Activated T-helper 2 cell treated with anti-CD3 and anti-CD28 coated beads, Interferon-gamma antibody, Interleukin-2, Interleukin-4, amounts not matched to agents 10 μg/mL and 5 μg/mL and 100 μg/mL, durations not matched to agents 14 hours and 24 hours and 36 hours (primary cell): ENCODE measurements at regions of chr12 and their contacts with region 1.

Region 1: DNA sequence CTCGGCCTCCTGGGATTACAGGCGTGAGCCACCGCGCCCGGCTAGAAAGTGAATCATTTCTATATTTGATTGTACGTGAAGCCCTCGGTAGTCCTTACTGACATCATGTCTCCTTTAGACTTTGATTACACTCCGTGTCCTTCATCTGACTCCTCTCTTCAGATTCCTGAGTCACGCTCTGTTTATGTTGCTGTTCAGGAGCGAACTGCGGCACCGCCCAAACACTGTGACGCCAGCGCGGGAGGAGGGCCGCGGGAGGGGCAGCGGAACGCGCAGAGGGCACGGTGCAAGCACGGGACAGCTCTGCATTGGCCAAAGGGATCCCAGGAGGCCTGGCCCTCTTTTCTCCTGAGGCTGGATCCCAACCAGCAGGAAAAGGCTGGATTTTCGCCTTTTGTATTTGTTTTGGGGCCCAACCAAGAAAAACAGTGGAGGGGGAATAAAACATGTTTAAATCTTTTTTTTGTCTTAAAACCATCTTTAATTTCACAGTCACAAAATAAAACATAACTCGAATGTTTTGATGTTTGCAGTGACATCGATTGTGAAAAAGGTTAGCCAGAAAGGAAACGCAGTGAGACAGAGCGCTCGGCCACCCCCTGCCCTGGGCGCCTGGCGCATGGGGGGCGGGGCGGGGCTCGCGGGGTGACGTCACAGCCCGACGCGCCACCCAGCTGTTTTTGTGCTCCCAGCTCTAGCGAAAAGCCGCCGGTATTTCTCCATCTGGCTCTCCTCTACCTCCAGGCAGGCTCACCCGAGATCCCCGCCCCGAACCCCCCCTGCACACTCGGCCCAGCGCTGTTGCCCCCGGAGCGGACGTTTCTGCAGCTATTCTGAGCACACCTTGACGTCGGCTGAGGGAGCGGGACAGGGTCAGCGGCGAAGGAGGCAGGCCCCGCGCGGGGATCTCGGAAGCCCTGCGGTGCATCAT is at the start of gene GABARAPL1:
- DNase-seq: peak; percentile 81
- H3K4me3 Mint-ChIP-seq: peak within 1 kb of the TSS; percentile 91
- H3K27ac Mint-ChIP-seq: peak within 1 kb of the TSS; percentile 93
- H3K4me1 Mint-ChIP-seq: peaks cover 30% of the 10 kb centered on the region
- H3K27me3 Mint-ChIP-seq: peaks cover 21% of the 10 kb centered on the region
- total RNA-seq, gene GABARAPL1: 4.0 and 5.2 TPM in 2 replicates

Region 2: DNA sequence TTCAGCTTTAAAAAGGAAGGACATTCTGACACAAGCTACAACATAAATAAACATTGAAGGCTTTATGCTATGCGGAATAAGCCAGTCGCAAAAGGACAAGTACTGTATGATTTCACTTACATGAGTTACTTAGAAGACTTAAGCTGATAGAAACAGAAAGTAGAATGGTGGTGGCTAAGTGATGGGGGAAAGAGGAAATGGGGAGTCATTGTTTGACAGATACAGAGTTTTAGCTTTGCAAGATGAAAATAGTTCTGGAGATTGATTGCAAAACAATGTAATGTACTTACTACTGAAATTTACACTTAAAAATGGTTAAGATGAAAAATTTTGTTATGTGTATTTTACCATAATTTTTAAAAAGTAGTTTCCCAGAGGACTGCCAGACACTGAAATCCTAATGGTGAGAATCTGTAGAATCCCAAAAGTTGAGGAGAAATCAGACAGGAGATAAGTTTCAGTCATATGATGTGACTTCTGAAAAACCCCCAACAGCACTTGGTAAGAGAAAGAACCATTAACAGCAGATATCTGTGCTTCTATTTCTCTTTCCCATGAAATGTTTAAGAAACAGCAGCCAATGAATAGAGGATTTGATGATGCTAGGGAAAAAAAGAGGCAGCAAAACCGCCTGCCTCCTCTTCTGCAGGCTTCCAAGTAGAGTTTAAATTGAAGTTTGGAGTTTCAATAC is 263.7 kb before region 1 on chr12:
- intact Hi-C with region 1: loop called (anchors 10 kb)
- DNase-seq: no peak
- H3K4me3 Mint-ChIP-seq: peak overlapping the region; percentile 23
- H3K27ac Mint-ChIP-seq: peak overlapping the region; percentile 53
- H3K4me1 Mint-ChIP-seq: peaks cover 57% of the 10 kb centered on the region
- H3K27me3 Mint-ChIP-seq: no peaks in the 10 kb centered on the region

Region 3: DNA sequence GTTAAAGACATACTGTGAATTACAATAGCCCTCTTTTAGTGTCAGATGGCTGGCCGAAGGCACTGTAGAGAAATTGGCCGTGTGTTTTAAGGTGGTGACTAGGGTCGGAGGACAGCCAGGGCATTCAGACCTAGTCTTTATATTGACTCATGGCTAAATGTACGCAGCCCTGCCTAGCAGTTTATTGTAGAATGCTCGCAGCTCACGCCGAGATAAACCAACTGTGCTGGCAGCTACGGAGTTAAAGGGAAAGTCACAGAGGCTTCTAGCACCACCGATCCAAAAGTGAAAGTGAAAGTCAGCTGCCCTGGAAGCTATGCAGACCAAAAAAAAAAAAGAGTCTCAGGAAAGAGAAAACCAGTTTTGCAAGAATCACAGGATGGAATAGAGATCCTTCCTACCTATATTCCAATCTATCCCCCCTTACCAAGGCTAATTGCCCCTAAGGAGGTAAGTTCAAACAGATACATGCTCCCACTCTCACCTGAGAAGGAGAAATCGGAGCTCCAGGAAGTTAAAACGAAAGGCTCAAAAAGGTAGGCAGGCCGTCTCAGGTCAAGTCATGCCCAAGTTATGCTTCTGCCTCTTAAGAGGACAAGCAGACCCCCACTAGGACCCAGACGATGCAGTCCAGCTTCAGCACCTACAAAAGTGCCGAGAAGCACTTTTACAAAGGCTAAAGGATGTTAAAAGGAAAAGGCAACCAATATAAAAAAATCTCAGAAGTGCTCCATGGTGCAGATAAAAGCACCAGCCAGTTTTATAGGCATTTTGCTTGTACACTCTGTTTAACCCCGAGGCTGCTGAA is 152.6 kb after region 1 on chr12:
- intact Hi-C with region 1: loop called (anchors 10 kb)
- DNase-seq: peak; percentile 51
- H3K4me3 Mint-ChIP-seq: no peak overlapping the region
- H3K27ac Mint-ChIP-seq: no peak overlapping the region
- H3K4me1 Mint-ChIP-seq: peaks cover 9% of the 10 kb centered on the region
- H3K27me3 Mint-ChIP-seq: peaks cover 27% of the 10 kb centered on the region